GM12878 (cell line): ENCODE measurements at regions of chr7 and their contacts with region 1.

Region 1: DNA sequence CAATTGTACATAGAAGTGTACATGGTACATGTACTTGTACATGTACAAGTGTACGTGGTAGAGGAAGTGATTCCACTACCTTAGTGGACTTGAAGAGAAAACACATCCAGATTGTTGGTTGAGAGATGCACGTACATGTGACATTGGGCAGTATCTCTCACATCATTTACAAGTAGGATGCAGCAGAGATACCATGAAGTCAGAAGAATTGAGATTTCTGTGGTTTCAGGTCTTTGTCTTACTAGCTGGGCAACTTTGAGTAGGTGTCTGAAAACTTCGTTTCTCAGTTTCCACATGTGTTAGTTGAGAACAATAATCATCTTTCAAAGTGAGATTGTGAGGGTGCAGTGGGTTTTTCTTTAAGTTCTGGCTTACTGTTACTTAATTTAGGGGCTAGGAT is 21.5 kb downstream of the CLDN12 start:
- DNase-seq: peak; percentile 53
- ATAC-seq: peak; percentile 94
- H3K4me3 ChIP-seq: no peak overlapping the region
- H3K27ac ChIP-seq: no peak overlapping the region
- H3K4me1 ChIP-seq: peaks cover 10% of the 10 kb centered on the region
- H3K27me3 ChIP-seq: no peaks in the 10 kb centered on the region
- CTCF ChIP-seq: no peak
- EP300 ChIP-seq: peak; percentile 67 to 86; a peak in 3 of 4 replicates
- POLR2A ChIP-seq: no peak
- RAD21 ChIP-seq: no peak

Region 2: DNA sequence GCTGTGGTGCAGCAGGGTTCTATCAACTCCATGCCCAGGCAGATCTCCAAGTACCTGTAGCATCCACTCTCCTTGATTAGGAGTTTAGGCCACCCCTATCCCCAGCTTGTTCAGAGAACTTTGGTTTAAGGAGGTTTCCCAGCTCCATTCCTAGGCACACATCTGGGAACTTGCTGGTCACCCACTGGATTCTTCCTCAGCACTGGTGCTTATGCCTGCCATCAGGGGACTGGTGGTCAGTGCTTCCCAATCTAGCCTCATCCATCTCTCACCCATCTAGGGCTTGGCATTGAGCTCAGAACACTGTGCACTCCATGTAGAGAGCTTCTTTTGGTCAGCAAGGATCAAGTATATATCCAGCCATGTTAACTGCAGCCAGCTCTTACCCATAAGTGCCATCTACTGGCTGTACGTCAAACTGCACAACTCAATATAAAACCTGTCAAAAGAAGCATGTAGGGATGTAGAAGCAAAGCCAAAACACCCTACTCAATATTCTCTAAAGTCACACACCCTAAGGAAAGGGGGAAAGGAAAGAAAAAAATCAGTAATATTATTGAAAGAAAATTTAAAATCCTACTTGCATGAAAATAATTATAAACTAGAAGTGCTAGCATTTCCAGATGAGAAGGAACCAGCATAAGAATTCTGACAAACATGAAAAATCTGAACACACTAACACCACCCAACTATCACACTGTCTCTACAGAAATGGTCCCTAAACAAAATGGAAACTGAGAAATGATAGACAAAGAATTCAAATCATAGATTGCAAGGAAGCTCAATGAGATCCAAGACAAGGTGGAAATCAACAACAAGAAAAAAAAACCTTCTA is 801.7 kb before region 1 on chr7:
- CTCF ChIA-PET with region 1: no interaction called
- POLR2A ChIA-PET with region 1: no interaction called
- RAD21 ChIA-PET with region 1: no interaction called
- SMC1A ChIA-PET with region 1: no interaction called
- in situ Hi-C with region 1: no loop called
- intact Hi-C with region 1: loop called (anchors 5 kb)
- DNase-seq: peak; percentile 3
- ATAC-seq: peak; percentile 93
- H3K4me3 ChIP-seq: no peak overlapping the region
- H3K27ac ChIP-seq: no peak overlapping the region
- H3K4me1 ChIP-seq: no peaks in the 10 kb centered on the region
- H3K27me3 ChIP-seq: no peaks in the 10 kb centered on the region
- CTCF ChIP-seq: peak; percentile 69 to 80 (median 79)
- EP300 ChIP-seq: no peak
- POLR2A ChIP-seq: no peak
- RAD21 ChIP-seq: peak; percentile 79

Region 3: GRCh38 chr7:90262438-90262837 is 162.3 kb before region 1 on chr7:
- CTCF ChIA-PET with region 1: interaction called, 50 read pairs
- POLR2A ChIA-PET with region 1: no interaction called
- RAD21 ChIA-PET with region 1: interaction called, 13 read pairs
- SMC1A ChIA-PET with region 1: interaction called, 19 read pairs
- in situ Hi-C with region 1: no loop called
- intact Hi-C with region 1: loop called (anchors 2 kb)
- DNase-seq: no peak
- ATAC-seq: peak; percentile 92
- H3K4me3 ChIP-seq: no peak overlapping the region
- H3K27ac ChIP-seq: no peak overlapping the region
- H3K4me1 ChIP-seq: no peaks in the 10 kb centered on the region
- H3K27me3 ChIP-seq: 0 out of 4 replicates have a peak, but pooled peaks cover 0 to under 1% of the 10 kb centered on the region in 2 experiments
- CTCF ChIP-seq: peak; percentile 28 to 68 (median 32); a peak in 4 of 6 replicates
- EP300 ChIP-seq: no peak
- POLR2A ChIP-seq: no peak
- RAD21 ChIP-seq: peak; percentile 82

Region 4: GRCh38 chr7:90298145-90299038 is 126.3 kb before region 1 on chr7:
- CTCF ChIA-PET with region 1: interaction called, 8 read pairs
- POLR2A ChIA-PET with region 1: no interaction called
- RAD21 ChIA-PET with region 1: interaction called, 18 read pairs
- SMC1A ChIA-PET with region 1: interaction called, 11 read pairs
- in situ Hi-C with region 1: no loop called
- intact Hi-C with region 1: no loop called
- DNase-seq: no peak
- ATAC-seq: peak; percentile 98
- H3K4me3 ChIP-seq: no peak overlapping the region
- H3K27ac ChIP-seq: no peak overlapping the region
- H3K4me1 ChIP-seq: no peaks in the 10 kb centered on the region
- H3K27me3 ChIP-seq: no peaks in the 10 kb centered on the region; a peak in 1 of 4 replicates
- CTCF ChIP-seq: peak; percentile 58 to 72 (median 67)
- EP300 ChIP-seq: no peak
- POLR2A ChIP-seq: no peak
- RAD21 ChIP-seq: peak; percentile 56

Region 5: DNA sequence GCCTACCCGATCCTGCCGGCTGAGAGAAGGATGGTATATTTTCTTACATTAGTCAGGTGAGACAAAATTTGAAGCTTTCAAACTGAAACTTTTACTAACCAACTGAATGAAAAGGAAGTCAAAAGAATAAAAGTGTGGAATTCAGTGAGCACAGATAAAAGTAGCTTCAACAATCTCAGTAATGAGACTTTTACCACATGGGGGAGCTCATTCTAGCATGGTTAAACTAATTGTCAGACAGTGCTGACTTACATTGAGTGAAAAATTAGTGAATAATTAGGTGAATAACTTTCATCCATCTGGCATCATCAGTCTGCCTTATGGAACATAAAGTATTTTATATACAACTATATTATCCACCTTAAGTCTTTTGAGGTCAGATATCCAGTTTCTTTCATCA is 112.0 kb before region 1 on chr7:
- CTCF ChIA-PET with region 1: interaction called, 121 read pairs
- POLR2A ChIA-PET with region 1: interaction called, 4 read pairs
- RAD21 ChIA-PET with region 1: interaction called, 37 read pairs
- SMC1A ChIA-PET with region 1: interaction called, 35 read pairs
- in situ Hi-C with region 1: no loop called
- intact Hi-C with region 1: loop called (anchors 1 kb)
- DNase-seq: no peak
- ATAC-seq: peak; percentile 73
- H3K4me3 ChIP-seq: no peak overlapping the region
- H3K27ac ChIP-seq: no peak overlapping the region
- H3K4me1 ChIP-seq: no peaks in the 10 kb centered on the region
- H3K27me3 ChIP-seq: no peaks in the 10 kb centered on the region
- CTCF ChIP-seq: peak; percentile 23 to 42 (median 32); a peak in 3 of 6 replicates
- EP300 ChIP-seq: no peak
- POLR2A ChIP-seq: no peak
- RAD21 ChIP-seq: peak; percentile 42

Region 6: DNA sequence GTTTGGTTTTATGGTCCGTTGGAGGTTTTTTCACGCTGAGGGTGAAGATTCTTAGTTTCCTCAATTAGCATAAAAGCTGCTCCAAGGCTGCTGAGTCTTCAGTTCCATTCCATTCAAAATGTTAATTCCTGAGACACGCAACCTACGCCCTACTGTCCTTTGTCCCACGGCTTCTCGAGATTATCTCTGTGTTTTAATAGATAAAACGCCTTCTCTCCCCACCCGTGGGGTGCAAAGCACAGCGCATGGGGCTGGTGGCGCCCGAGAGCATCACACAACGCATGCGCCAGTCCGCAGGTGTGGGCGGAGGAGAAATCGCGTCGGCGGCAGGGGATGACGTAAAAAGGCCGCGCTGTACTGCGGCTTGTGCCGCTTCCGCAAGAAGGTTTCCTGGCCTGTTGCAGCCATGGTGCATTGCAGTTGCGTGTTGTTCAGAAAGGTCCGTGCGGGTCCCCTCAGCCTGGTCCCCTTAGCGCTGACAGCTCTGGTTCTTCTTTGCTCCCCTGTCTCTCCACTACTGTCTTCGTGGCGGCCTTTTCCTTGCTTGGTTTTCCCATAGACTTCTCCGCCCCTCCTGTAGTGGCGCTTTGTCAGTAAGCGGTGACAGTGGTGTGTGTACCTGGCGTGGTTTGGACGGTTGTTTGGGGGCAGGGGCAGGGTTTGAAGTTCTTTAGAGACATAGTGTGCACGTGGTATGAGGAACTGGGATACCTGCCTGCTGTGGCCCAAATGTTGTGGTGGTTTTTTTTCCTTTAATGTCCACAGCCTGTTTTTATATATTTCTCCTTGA is 78.2 kb before region 1 on chr7 and contains the start of gene GTPBP10:
- CTCF ChIA-PET with region 1: interaction called, 15 read pairs
- POLR2A ChIA-PET with region 1: no interaction called
- RAD21 ChIA-PET with region 1: interaction called, 4 read pairs
- SMC1A ChIA-PET with region 1: interaction called, 4 read pairs
- in situ Hi-C with region 1: no loop called
- intact Hi-C with region 1: no loop called
- DNase-seq: peak; percentile 88
- ATAC-seq: peak; percentile 92
- H3K4me3 ChIP-seq: peak within 1 kb of the TSS; percentile 92
- H3K27ac ChIP-seq: peak within 1 kb of the TSS; percentile 99
- H3K4me1 ChIP-seq: peaks cover 6% of the 10 kb centered on the region; the same call in 1 of the 2 replicates
- H3K27me3 ChIP-seq: no peaks in the 10 kb centered on the region
- CTCF ChIP-seq: peak; percentile 82 to 87 (median 85)
- EP300 ChIP-seq: peak in 1 of 2 experiments; percentile 64; a peak in 1 of 4 replicates
- POLR2A ChIP-seq: peak; percentile 99
- RAD21 ChIP-seq: 0 out of 2 replicates have a peak, but pooled peaks have one; percentile 8
- polyA plus RNA-seq, gene GTPBP10: 29.4 to 32.5 TPM

Region 7: GRCh38 chr7:90412458-90413184 is 12.1 kb before region 1 on chr7:
- CTCF ChIA-PET with region 1: interaction called, 39 read pairs
- POLR2A ChIA-PET with region 1: interaction called, 4 read pairs
- RAD21 ChIA-PET with region 1: interaction called, 7 read pairs
- SMC1A ChIA-PET with region 1: interaction called, 20 read pairs
- in situ Hi-C with region 1: no loop called
- intact Hi-C with region 1: no loop called
- DNase-seq: no peak
- ATAC-seq: peak; percentile 90
- H3K4me3 ChIP-seq: no peak overlapping the region
- H3K27ac ChIP-seq: no peak overlapping the region
- H3K4me1 ChIP-seq: no peaks in the 10 kb centered on the region
- H3K27me3 ChIP-seq: no peaks in the 10 kb centered on the region
- CTCF ChIP-seq: peak; percentile 39 to 58 (median 53); a peak in 5 of 6 replicates
- EP300 ChIP-seq: no peak
- POLR2A ChIP-seq: no peak
- RAD21 ChIP-seq: peak; percentile 44; the same call in 1 of the 2 replicates